B cell (primary cell): ENCODE measurements at regions of chr10 and their contacts with region 1.

Region 1: GRCh38 chr10:12348870-12349628 is at the start of gene CAMK1D:
- DNase-seq: peak; percentile 96
- ATAC-seq: peak; percentile 63
- H3K4me3 ChIP-seq: peak within 1 kb of the TSS; percentile 74 to 93 (median 76)
- H3K4me3 Mint-ChIP-seq: peak within 1 kb of the TSS; percentile 99
- H3K27ac ChIP-seq: peak within 1 kb of the TSS; percentile 73 to 94
- H3K27ac Mint-ChIP-seq: peak within 1 kb of the TSS; percentile 99
- H3K4me1 ChIP-seq: peaks cover 35 to 43% of the 10 kb centered on the region in 2 donors
- H3K4me1 Mint-ChIP-seq: peaks cover 59% of the 10 kb centered on the region
- H3K27me3 ChIP-seq: no peaks in the 10 kb centered on the region
- H3K27me3 Mint-ChIP-seq: no peaks in the 10 kb centered on the region
- CTCF ChIP-seq: peak; percentile 2
- total RNA-seq, gene CAMK1D: 69.7 and 77.3 TPM in 2 replicates

Region 2: GRCh38 chr10:12068449-12069269 is 280.4 kb before region 1 on chr10 and contains the start of gene DHTKD1:
- CTCF ChIA-PET with region 1: no interaction called
- POLR2A ChIA-PET with region 1: no interaction called
- intact Hi-C with region 1: loop called (anchors 10 kb)
- DNase-seq: peak; percentile 98
- ATAC-seq: peak; percentile 98
- H3K4me3 ChIP-seq: peak within 1 kb of the TSS; percentile 92 to 98 (median 96)
- H3K4me3 Mint-ChIP-seq: peak within 1 kb of the TSS; percentile 88
- H3K27ac ChIP-seq: peak within 1 kb of the TSS; percentile 80 to 91
- H3K27ac Mint-ChIP-seq: peak within 1 kb of the TSS; percentile 95
- H3K4me1 ChIP-seq: peaks cover 27 to 33% of the 10 kb centered on the region in 2 donors
- H3K4me1 Mint-ChIP-seq: peaks cover 41% of the 10 kb centered on the region
- H3K27me3 ChIP-seq: no peaks in the 10 kb centered on the region
- H3K27me3 Mint-ChIP-seq: no peaks in the 10 kb centered on the region
- CTCF ChIP-seq: peak; percentile 44
- total RNA-seq, gene DHTKD1: 72.3 and 77.0 TPM in 2 replicates

Region 3: DNA sequence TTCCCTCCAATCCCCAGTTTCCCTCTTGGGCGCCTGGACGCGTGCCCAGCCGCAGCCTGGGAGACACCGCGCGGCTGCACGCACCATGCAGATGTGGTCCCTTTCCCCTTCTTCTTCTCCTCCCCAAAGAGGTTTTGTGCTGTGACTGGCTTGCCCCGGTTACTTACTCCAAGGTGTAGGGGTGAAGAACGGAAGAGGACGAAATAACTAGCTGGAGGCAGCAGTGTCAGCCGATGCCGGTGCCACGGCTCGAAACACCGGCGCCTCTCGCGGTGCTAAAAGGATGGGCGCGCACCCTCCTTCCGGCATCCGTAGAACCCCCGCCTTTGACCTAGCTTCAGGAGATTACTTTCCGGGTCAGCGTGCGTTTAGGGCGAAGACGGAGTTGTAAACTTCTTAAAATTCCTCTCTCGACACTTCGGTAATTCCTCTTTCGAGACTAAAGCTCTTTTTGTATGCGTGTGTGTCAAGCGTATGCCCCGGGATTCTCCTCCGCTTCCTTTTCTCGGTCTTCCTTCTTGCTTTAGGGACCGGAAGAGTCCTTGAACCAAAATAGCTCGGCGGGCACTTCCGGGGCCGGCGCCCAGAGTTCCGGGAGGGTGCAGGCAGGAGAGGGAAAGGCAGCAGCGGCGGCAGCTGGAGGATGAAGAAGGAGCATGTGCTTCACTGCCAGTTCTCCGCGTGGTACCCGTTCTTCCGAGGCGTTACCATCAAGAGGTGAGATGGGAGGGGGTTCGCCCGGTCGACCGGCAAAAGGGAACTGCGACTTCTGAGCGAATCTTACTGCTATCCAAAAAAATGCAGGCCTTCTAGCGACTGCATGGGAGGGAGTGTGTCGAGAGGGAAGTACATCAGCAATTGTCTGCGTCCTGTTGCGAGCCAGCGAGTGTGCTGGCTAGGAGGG is 153.2 kb before region 1 on chr10 and contains the starts of genes CDC123 and NUDT5:
- CTCF ChIA-PET with region 1: no interaction called
- POLR2A ChIA-PET with region 1: interaction called, 9 read pairs
- intact Hi-C with region 1: loop called (anchors 1 kb)
- DNase-seq: peak; percentile 93
- ATAC-seq: peak; percentile 90
- H3K4me3 ChIP-seq: peak within 1 kb of the TSS; percentile 87 to 97 (median 95)
- H3K4me3 Mint-ChIP-seq: peak within 1 kb of the TSS; percentile 93
- H3K27ac ChIP-seq: peak within 1 kb of the TSS; percentile 91 to 94
- H3K27ac Mint-ChIP-seq: peak within 1 kb of the TSS; percentile 99
- H3K4me1 ChIP-seq: peaks cover 18 to 24% of the 10 kb centered on the region in 2 donors
- H3K4me1 Mint-ChIP-seq: peaks cover 42% of the 10 kb centered on the region
- H3K27me3 ChIP-seq: no peaks in the 10 kb centered on the region
- H3K27me3 Mint-ChIP-seq: no peaks in the 10 kb centered on the region
- CTCF ChIP-seq: no peak
- total RNA-seq, gene CDC123: 56.0 and 62.0 TPM in 2 replicates
- total RNA-seq, gene NUDT5: 39.1 and 39.9 TPM in 2 replicates

Region 4: GRCh38 chr10:12252882-12253546 is 96.0 kb before region 1 on chr10:
- CTCF ChIA-PET with region 1: interaction called, 10 read pairs
- POLR2A ChIA-PET with region 1: interaction called, 6 read pairs
- intact Hi-C with region 1: loop called (anchors 2 kb)
- DNase-seq: peak; percentile 86
- ATAC-seq: peak; percentile 99
- H3K4me3 ChIP-seq: peak overlapping the region in 2 of 5 experiments; percentile 23 to 53
- H3K4me3 Mint-ChIP-seq: peak overlapping the region; percentile 83
- H3K27ac ChIP-seq: peak overlapping the region; percentile 57
- H3K27ac Mint-ChIP-seq: peak overlapping the region; percentile 93
- H3K4me1 ChIP-seq: peaks cover 14% of the 10 kb centered on the region in 2 donors
- H3K4me1 Mint-ChIP-seq: peaks cover 17% of the 10 kb centered on the region
- H3K27me3 ChIP-seq: no peaks in the 10 kb centered on the region
- H3K27me3 Mint-ChIP-seq: no peaks in the 10 kb centered on the region
- CTCF ChIP-seq: peak; percentile 82

Region 5: DNA sequence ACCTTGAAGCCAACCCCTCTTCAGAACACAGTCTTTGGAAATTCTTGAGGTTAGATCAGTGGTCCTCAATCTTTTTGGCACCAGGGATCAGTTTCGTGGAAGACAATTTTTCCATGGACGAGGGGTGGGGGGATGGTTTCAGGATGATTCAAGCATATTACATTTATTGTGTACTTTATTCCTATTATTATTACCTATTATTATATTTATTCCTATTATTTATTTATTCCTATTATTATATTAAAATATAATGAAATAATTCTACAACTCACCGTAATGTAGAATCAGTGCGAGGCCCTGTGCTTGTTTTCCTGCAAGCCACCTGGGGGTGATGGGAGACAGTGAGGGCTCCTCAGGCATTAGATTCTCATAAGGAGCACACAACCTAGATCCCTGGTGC is 18.2 kb after region 1 on chr10:
- CTCF ChIA-PET with region 1: interaction called, 3 read pairs
- POLR2A ChIA-PET with region 1: interaction called, 3 read pairs
- intact Hi-C with region 1: loop called (anchors 2 kb)
- DNase-seq: no peak
- ATAC-seq: no peak
- H3K4me3 ChIP-seq: no peak overlapping the region
- H3K4me3 Mint-ChIP-seq: no peak overlapping the region
- H3K27ac ChIP-seq: peak overlapping the region in 1 of 2 donors; percentile 49
- H3K27ac Mint-ChIP-seq: no peak overlapping the region
- H3K4me1 ChIP-seq: peaks cover 30 to 36% of the 10 kb centered on the region in 2 donors
- H3K4me1 Mint-ChIP-seq: peaks cover 37% of the 10 kb centered on the region
- H3K27me3 ChIP-seq: no peaks in the 10 kb centered on the region
- H3K27me3 Mint-ChIP-seq: no peaks in the 10 kb centered on the region
- CTCF ChIP-seq: no peak

Region 6: GRCh38 chr10:12419262-12419847 is 70.3 kb after region 1 on chr10:
- CTCF ChIA-PET with region 1: no interaction called
- POLR2A ChIA-PET with region 1: no interaction called
- intact Hi-C with region 1: loop called (anchors 10 kb)
- DNase-seq: no peak
- ATAC-seq: peak; percentile 56
- H3K4me3 ChIP-seq: no peak overlapping the region
- H3K4me3 Mint-ChIP-seq: peak overlapping the region; percentile 19
- H3K27ac ChIP-seq: peak overlapping the region in 1 of 2 donors; percentile 27
- H3K27ac Mint-ChIP-seq: peak overlapping the region; percentile 50
- H3K4me1 ChIP-seq: peaks cover 21 to 22% of the 10 kb centered on the region in 2 donors
- H3K4me1 Mint-ChIP-seq: peaks cover 74% of the 10 kb centered on the region
- H3K27me3 ChIP-seq: no peaks in the 10 kb centered on the region
- H3K27me3 Mint-ChIP-seq: no peaks in the 10 kb centered on the region
- CTCF ChIP-seq: no peak

Region 7: DNA sequence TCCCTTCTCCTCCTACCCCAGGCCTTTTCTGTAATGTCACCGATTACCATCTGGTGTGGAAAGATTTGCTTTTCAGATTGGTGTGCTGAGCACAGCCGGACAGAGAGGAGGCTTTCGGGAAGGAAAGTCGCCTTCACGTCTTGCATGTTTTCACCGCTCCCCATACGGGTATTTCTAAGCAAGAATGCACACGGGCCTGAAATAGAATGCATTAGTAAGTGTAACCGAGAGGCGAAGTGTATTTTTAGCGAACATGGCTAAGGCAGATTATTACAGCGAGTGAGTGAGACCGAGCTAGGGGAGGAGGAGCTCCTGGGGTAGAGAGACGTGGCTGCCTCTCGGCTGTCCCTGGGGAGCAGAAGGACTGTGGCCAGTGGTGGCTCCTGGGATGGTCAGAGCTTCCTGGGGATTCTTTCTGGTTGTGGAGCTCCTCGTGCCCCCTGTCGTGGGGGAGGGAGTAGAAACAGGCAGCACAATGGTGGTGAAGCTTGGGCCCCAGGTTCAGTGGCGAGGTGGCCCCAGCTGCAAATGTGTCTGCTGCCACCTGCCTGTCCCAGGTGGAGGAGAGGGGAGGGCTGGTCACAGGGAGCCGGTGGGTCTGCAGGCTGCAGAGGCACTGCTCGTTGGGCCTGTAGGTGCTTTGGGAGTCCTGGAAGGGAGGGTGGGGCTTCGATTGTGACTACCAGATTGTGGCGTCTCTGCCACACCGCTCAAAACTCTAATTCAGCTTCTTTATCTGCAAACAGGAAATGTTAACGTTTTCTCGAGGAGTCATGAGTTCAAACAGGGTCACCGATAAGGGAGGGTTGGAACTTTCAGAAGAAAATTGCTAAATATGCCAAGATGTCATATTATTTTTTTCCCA is 136.1 kb after region 1 on chr10:
- CTCF ChIA-PET with region 1: interaction called, 7 read pairs
- POLR2A ChIA-PET with region 1: interaction called, 3 read pairs
- intact Hi-C with region 1: loop called (anchors 2 kb)
- DNase-seq: peak; percentile 61
- ATAC-seq: peak; percentile 72
- H3K4me3 ChIP-seq: peak overlapping the region in 4 of 5 experiments; percentile 9 to 39 (median 17)
- H3K4me3 Mint-ChIP-seq: peak overlapping the region; percentile 88
- H3K27ac ChIP-seq: peak overlapping the region; percentile 54 to 61
- H3K27ac Mint-ChIP-seq: peak overlapping the region; percentile 92
- H3K4me1 ChIP-seq: peaks cover 28 to 38% of the 10 kb centered on the region in 2 donors
- H3K4me1 Mint-ChIP-seq: peaks cover 59% of the 10 kb centered on the region
- H3K27me3 ChIP-seq: no peaks in the 10 kb centered on the region
- H3K27me3 Mint-ChIP-seq: no peaks in the 10 kb centered on the region
- CTCF ChIP-seq: peak; percentile 32

Region 8: DNA sequence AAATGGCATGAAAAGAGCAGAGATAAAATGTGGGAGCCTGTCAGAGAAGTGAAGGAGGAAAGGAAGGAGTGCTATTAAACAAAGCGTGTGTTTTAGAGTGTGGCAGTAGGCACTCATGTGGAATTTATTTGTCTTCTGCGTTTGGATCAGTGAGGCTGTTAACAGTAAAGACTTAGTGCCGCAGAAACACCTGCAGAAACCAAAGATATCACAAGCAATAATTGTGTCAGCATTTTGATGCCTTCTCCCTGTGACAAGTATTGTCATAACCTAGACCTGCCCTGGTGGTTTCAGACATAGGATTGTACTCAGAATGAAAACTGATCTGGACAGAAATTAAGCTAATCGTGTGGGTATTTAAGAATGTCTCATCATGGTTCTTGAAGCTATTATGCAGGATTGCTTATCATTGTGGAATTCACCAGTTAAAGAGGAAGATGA is 191.3 kb after region 1 on chr10:
- CTCF ChIA-PET with region 1: no interaction called
- POLR2A ChIA-PET with region 1: no interaction called
- intact Hi-C with region 1: no loop called
- DNase-seq: no peak
- ATAC-seq: no peak
- H3K4me3 ChIP-seq: no peak overlapping the region
- H3K4me3 Mint-ChIP-seq: peak overlapping the region; percentile 2
- H3K27ac ChIP-seq: peak overlapping the region in 1 of 2 donors; percentile 53
- H3K27ac Mint-ChIP-seq: peak overlapping the region; percentile 1
- H3K4me1 ChIP-seq: peaks cover 16 to 29% of the 10 kb centered on the region in 2 donors
- H3K4me1 Mint-ChIP-seq: peaks cover 65% of the 10 kb centered on the region
- H3K27me3 ChIP-seq: no peaks in the 10 kb centered on the region
- H3K27me3 Mint-ChIP-seq: no peaks in the 10 kb centered on the region
- CTCF ChIP-seq: no peak